Left cardiac atrium (tissue), 4 donors: ENCODE measurements at regions of chr6 and their contacts with region 1.

Region 1: GRCh38 chr6:159968440-159969203 is at the start of gene IGF2R:
- DNase-seq: peak; percentile 94
- ATAC-seq: peak; percentile 93 to 97
- total RNA-seq, gene IGF2R: 50.1 to 56.2 TPM

Region 2: GRCh38 chr6:160030103-160030502 is 61.5 kb after region 1 on chr6:
- intact Hi-C with region 1: loop called in 1 of 2 experiments (anchors 5 kb)
- DNase-seq: peak; percentile 91
- ATAC-seq: peak; percentile 96 to 98

Region 3: DNA sequence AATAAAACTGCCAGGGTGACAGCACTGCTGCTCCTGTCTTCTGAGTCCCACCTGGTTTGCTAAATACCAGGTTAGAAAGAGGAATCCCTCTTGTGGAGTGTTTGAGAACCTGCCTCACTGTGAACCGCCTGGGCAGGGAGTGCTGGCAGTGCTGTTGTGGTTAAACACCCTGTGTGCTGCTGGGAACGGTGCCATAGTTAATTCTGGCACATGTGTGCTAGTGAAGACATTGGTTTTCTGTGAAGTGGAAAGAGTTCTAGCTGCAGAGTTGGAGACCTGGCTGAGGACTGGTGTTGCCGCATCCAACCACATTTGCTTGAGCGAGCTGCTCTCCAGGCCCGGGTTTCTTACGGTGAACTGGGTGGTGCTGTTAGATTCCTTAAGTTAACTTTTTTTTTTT is 73.0 kb after region 1 on chr6:
- intact Hi-C with region 1: loop called (anchors 5 to 10 kb)
- DNase-seq: peak; percentile 63
- ATAC-seq: peak; percentile 77 to 92

Region 4: GRCh38 chr6:160254467-160255312 is 286.1 kb after region 1 on chr6:
- intact Hi-C with region 1: no loop called
- DNase-seq: no peak
- ATAC-seq: no peak